HCT116 (cell line): ENCODE measurements at regions of chr1 and their contacts with region 1.

Region 1: DNA sequence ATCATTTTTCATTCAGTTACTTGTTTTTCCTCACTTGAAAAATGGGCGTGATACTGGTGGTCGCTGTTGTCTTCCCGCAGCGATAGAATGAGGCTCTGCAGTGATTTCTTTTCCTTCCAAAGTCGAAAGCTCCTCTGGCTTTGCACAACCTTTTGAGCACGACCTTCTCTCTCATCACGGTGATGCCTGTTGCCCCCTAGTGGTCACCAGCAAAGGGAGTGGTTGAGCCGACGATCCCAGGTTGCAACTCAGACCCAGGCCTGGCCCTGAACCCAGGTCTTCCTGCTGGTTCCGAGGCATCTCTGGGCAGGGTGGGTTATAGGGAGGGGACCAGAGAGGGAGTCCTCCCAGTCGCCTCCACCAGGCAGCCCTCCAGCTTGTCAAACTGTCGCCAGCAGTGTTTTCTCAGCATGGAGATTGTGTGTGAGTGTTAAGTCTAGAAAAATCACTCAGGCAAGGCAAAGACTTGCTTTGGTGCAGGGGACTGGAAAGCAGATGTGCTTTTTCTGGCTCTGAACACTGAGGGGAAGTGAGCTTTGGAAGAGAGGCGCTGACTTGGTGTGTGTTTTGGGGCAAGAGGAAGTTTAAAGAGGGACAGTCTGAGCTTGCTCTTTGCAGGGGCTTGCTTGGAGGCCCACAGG is 285.3 kb downstream of the CAMTA1 start:
- DNase-seq: peak; percentile 18
- ATAC-seq: peak; percentile 93
- H3K4me3 ChIP-seq: no peak overlapping the region
- H3K27ac ChIP-seq: no peak overlapping the region
- H3K4me1 ChIP-seq: 0 out of 4 replicates have a peak, but pooled peaks cover 0 to 4% of the 10 kb centered on the region in 2 experiments
- H3K27me3 ChIP-seq: peaks cover 34% of the 10 kb centered on the region; the same call in 1 of the 2 replicates
- CTCF ChIP-seq: peak; percentile 70 to 93 (median 87)
- POLR2A ChIP-seq: no peak
- RAD21 ChIP-seq: peak; percentile 78

Region 2: DNA sequence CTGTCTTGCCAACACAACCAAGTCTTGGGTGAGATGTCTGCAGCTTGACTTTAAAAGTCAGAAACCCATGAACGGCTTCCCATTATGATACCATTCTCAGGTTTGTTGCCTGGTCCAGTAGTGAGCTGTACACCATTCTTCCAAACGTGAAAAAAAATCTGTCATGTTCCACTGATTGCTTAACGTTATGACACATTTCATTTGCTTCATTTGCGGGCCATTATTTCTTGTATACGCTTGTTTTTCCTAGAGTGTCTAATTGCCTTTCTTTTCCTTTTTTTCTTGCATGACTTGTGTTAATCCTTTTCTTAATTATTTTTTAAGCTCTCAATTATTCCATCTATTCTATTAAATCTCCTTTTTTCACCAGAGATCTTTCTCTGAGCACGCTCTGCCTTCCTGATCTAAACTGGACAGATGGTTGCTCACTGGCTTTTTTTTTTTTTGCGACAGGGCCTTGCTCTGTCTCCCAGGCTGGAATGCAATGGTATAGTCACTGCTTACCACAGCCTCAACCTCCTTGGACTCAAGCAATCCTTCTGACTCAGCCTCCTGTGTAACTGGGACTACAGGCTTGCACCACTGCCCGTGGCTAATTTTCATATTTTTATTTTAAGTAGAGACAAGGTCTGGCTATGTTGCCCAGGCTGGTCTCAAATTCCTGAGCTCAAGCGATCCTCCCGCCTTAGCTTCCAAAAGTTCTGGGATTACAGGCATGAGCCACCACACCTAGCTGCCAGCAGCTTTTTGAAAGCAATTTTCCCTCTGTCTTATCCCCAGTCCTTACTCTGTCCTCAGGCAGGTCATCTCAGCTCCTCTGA is 317.0 kb before region 1 on chr1:
- CTCF ChIA-PET with region 1: no interaction called
- POLR2A ChIA-PET with region 1: no interaction called
- RAD21 ChIA-PET with region 1: no interaction called
- intact Hi-C with region 1: no loop called
- DNase-seq: no peak
- ATAC-seq: no peak
- H3K4me3 ChIP-seq: no peak overlapping the region
- H3K27ac ChIP-seq: no peak overlapping the region
- H3K4me1 ChIP-seq: peaks cover 0 to 3% of the 10 kb centered on the region in 2 experiments; a peak in 1 of 4 replicates
- H3K27me3 ChIP-seq: no peaks in the 10 kb centered on the region; the same call in 1 of the 2 replicates
- CTCF ChIP-seq: no peak
- POLR2A ChIP-seq: no peak
- RAD21 ChIP-seq: no peak

Region 3: GRCh38 chr1:6794164-6794563 is 276.3 kb before region 1 on chr1:
- CTCF ChIA-PET with region 1: no interaction called
- POLR2A ChIA-PET with region 1: no interaction called
- RAD21 ChIA-PET with region 1: no interaction called
- intact Hi-C with region 1: loop called (anchors 2 kb)
- DNase-seq: peak; percentile 26
- ATAC-seq: no peak
- H3K4me3 ChIP-seq: no peak overlapping the region
- H3K27ac ChIP-seq: no peak overlapping the region
- H3K4me1 ChIP-seq: no peaks in the 10 kb centered on the region
- H3K27me3 ChIP-seq: no peaks in the 10 kb centered on the region
- CTCF ChIP-seq: peak in 2 of 3 experiments; percentile 60 to 62; a peak in 3 of 6 replicates
- POLR2A ChIP-seq: no peak
- RAD21 ChIP-seq: peak; percentile 69; the same call in 1 of the 2 replicates

Region 4: GRCh38 chr1:6956488-6957159 is 113.9 kb before region 1 on chr1:
- CTCF ChIA-PET with region 1: no interaction called
- POLR2A ChIA-PET with region 1: no interaction called
- RAD21 ChIA-PET with region 1: no interaction called
- intact Hi-C with region 1: no loop called
- DNase-seq: no peak
- ATAC-seq: no peak
- H3K4me3 ChIP-seq: no peak overlapping the region
- H3K27ac ChIP-seq: no peak overlapping the region
- H3K4me1 ChIP-seq: peaks cover 15 to 25% of the 10 kb centered on the region in 2 experiments; a peak in 3 of 4 replicates
- H3K27me3 ChIP-seq: no peaks in the 10 kb centered on the region
- CTCF ChIP-seq: no peak
- POLR2A ChIP-seq: no peak
- RAD21 ChIP-seq: no peak

Region 5: DNA sequence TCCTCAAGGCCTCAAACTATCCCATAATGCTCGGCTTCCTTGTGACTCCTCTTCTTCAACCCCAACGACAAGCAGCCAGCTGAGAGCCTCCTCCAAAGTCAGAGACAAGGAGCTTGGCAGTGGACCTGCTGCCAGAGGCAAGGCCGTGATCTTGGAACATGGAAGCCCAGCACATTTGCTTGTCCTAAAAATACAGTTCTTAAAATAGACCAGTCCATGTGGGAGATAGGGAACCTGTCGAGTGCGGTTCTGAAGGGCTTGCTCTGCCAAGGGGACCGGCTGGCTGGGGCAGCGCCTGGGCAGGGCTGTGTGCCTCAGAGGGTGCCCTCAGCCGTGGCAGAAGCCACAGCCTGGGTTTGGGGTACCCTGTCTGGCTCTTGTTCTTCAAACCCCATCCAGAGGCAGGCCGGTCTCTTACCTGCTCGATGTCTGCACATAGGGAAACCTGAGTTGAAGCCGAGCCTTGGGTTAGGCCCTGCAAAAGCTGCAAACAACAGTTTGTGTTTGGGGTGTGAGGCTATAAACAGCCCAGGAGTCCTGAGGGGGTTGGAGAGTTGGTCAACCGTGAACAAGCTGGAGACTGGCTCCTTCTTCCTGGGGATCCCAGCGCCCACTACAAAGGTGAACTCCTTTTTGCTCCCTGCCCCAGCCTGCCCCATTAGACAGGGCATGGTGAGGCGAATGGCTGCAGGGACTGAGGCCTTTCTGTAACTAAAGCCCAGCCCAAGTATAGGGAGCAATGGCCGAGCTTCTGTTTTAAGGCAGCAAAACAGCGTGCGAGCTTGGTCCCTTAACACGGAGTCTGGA is 56.5 kb before region 1 on chr1:
- CTCF ChIA-PET with region 1: no interaction called
- POLR2A ChIA-PET with region 1: no interaction called
- RAD21 ChIA-PET with region 1: no interaction called
- intact Hi-C with region 1: no loop called
- DNase-seq: no peak
- ATAC-seq: no peak
- H3K4me3 ChIP-seq: no peak overlapping the region
- H3K27ac ChIP-seq: no peak overlapping the region
- H3K4me1 ChIP-seq: peaks cover 0 to 7% of the 10 kb centered on the region in 2 experiments; a peak in 1 of 4 replicates
- H3K27me3 ChIP-seq: no peaks in the 10 kb centered on the region
- CTCF ChIP-seq: no peak
- POLR2A ChIP-seq: no peak
- RAD21 ChIP-seq: no peak

Region 6: GRCh38 chr1:7042322-7043190 is 28.0 kb before region 1 on chr1:
- CTCF ChIA-PET with region 1: interaction called, 14 read pairs
- POLR2A ChIA-PET with region 1: no interaction called
- RAD21 ChIA-PET with region 1: no interaction called
- intact Hi-C with region 1: no loop called
- DNase-seq: peak; percentile 10
- ATAC-seq: peak; percentile 87
- H3K4me3 ChIP-seq: no peak overlapping the region
- H3K27ac ChIP-seq: no peak overlapping the region
- H3K4me1 ChIP-seq: no peaks in the 10 kb centered on the region
- H3K27me3 ChIP-seq: peaks cover 11% of the 10 kb centered on the region
- CTCF ChIP-seq: peak; percentile 49 to 74 (median 69)
- POLR2A ChIP-seq: no peak
- RAD21 ChIP-seq: peak; percentile 75

Region 7: DNA sequence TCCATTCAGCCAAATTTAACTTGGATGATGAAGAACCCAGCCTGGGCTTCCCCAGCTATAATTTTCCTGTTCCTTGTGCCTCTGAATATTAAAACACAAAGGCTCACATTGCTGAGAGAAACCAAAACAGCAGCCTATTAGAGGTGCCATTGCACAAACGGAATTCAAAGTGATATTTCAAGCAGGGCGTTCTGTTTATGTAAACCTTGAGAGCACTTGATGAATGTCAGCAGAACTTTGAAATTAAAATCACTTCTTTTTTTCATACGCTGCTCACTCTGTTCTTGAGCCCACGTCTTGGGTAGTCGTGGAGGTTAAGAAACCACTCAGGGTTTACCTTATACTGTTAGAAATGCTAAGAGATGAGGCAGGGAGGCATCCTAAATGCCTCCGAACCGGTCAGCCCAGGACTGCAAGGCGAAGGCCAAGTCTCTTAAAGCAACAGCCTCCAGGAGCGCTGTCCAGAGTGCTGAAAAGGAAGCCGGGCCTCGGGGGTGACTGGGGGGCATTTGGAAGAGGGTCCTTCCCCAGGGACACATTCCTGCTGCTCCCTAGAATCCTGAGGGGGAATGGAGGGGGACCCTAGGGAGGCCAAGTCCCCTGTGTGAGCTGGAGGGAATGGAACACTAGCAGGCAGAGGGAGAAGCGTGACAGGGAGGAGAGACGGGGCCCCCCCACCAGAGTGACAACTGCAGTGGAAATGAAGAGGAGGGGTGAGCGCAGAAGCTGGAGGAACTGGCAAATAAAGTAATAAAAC is 545.7 kb after region 1 on chr1:
- CTCF ChIA-PET with region 1: no interaction called
- POLR2A ChIA-PET with region 1: no interaction called
- RAD21 ChIA-PET with region 1: no interaction called
- intact Hi-C with region 1: loop called (anchors 10 kb)
- DNase-seq: no peak
- ATAC-seq: peak; percentile 47; the same call in 1 of the 2 replicates
- H3K4me3 ChIP-seq: no peak overlapping the region
- H3K27ac ChIP-seq: no peak overlapping the region
- H3K4me1 ChIP-seq: no peaks in the 10 kb centered on the region
- H3K27me3 ChIP-seq: peaks cover 37% of the 10 kb centered on the region; the same call in 1 of the 2 replicates
- CTCF ChIP-seq: no peak
- POLR2A ChIP-seq: no peak
- RAD21 ChIP-seq: no peak

Region 8: DNA sequence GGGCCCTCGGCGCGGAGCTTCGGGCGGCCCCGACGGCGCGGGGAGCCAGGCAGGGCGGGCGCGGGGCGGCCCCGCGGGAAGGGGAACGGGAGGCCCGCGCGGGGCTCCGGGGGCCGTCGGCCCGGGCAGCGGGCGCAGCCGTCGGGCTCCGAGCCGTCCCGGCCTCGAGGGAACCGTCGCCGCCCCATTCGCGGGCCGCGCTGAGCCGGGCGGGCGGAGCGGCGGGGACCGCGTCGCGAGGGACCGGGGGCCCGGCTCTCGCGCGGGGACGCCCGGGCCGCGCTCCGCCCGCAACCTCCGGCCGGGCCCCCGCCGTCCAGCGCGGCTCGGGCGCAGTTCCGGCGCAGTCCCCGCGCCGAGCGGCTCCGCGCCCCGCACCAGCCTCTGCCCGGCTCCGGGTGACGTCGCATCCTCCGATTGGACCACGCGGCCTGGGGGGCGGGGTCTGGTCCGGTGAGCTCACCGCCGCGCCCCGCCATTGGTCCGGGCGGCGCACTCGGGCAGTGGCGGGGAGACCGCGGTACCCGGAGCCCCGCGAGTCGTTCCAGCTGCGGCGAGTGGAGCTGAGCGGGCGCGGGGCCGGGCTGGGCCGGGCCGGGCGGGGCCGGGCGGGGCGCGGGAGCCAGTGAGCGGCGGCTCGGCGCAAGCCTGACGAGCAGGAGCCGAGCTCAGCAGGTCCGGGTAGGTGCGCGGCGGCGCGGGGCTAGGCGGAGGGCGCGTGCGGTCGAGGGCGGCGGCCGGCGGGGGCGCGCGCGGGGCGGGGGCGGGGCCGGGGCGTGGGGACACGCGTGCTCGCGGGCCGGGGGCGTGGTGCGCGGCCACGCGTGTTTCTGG is 633.9 kb after region 1 on chr1:
- CTCF ChIA-PET with region 1: no interaction called
- POLR2A ChIA-PET with region 1: no interaction called
- RAD21 ChIA-PET with region 1: no interaction called
- intact Hi-C with region 1: no loop called
- DNase-seq: peak; percentile 77
- ATAC-seq: peak; percentile 94
- H3K4me3 ChIP-seq: peak overlapping the region; percentile 65 to 72
- H3K27ac ChIP-seq: peak overlapping the region; percentile 64; the same call in 1 of the 2 replicates
- H3K4me1 ChIP-seq: peaks cover 5 to 14% of the 10 kb centered on the region in 2 experiments; a peak in 3 of 4 replicates
- H3K27me3 ChIP-seq: peaks cover 3% of the 10 kb centered on the region; the same call in 1 of the 2 replicates
- CTCF ChIP-seq: no peak
- POLR2A ChIP-seq: peak; percentile 32
- RAD21 ChIP-seq: no peak